Cardiac septum (tissue), 1 donor: ENCODE measurements at regions of chr17 and their contacts with region 1.

Region 1: GRCh38 chr17:61412143-61412859 is 12.7 kb downstream of the TBX2 start:
- DNase-seq: peak; percentile 91

Region 2: DNA sequence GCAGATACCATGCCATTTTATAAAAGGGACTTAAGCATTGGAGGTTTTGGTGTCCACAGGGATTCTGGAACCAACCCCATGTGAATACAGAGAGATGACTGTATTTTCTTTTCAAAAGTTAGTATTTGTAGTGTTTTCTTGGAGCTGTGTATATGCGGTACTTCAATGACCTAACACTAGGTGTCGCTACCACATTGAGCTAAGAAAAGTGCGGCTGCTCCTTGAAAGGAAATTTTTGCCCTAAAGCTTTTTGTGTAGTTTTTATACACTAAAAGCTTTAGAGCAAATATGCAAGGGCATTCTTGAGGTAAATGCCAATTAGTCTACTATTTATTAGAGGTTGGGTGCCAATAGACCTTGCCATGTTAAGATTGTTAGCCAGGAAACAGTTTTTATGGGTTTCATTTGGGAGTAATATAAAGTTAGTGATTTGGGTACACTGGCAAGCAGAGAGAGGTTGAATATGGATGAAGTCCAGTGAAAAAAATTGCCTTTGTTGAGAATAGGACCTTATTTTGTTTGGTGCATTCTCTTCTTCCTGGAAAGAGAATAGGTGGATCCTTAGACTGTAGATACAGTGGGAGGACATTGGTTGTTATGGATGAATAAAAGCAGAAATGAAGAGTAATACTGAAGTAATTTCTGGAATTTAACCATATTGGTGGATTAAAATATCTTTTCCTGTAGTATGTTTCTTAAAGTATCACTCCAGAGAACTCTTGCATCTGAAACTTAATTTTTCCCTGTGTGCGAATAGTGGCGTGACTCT is 691.4 kb before region 1 on chr17:
- intact Hi-C with region 1: loop called (anchors 10 kb)
- DNase-seq: no peak

Region 3: DNA sequence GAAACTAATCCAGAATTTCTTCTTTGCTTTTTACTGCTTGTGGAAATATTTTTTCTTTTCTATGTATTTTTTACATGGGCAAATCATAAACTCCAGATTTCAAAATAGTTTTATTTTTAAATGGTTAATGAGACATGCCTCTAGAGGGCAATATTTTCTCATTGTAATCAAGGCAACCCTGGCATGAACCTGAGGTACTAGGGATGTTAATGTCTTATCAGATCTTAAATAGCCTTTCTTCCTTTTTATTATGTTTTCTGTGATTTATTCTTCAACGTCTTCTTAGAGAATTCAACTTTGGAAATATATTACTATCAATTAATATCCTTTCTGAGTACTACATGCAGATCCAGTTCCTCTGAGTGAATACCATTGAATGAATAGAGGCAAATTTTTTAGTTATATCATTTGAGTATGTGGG is 410.0 kb before region 1 on chr17:
- intact Hi-C with region 1: loop called (anchors 5 kb)
- DNase-seq: no peak

Region 4: DNA sequence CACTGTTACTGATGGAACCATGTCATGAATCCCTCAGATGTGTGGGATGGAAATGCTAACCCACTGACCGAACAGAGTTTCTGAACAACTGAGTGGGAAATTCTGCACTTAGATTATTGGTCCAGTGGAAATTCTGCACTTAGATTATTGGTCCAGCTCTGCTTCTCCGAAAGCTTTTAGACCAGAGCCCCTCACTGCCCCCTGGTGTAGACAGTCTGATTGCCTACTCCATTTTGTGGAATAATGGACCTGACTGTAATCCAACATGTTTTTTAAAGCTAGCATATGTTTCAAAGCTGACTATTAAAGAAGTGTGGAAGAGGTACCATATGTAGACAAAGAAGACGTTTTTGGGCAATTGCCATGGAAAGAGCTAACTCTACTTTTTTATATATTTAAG is 63.0 kb before region 1 on chr17:
- intact Hi-C with region 1: no loop called
- DNase-seq: no peak

Region 5: GRCh38 chr17:61440706-61441105 is 28.4 kb after region 1 on chr17:
- intact Hi-C with region 1: no loop called
- DNase-seq: no peak

Region 6: GRCh38 chr17:61551255-61551742 is 139.0 kb after region 1 on chr17:
- intact Hi-C with region 1: loop called (anchors 2 kb)
- DNase-seq: no peak

Region 7: GRCh38 chr17:61837175-61838051 is 425.1 kb after region 1 on chr17:
- intact Hi-C with region 1: loop called (anchors 5 kb)
- DNase-seq: no peak

Region 8: GRCh38 chr17:62065598-62066468 is 653.5 kb after region 1 on chr17:
- intact Hi-C with region 1: loop called (anchors 5 kb)
- DNase-seq: peak; percentile 100